ENCODE measurements at regions of chr7 and their contacts with region 1.

Region 1: DNA sequence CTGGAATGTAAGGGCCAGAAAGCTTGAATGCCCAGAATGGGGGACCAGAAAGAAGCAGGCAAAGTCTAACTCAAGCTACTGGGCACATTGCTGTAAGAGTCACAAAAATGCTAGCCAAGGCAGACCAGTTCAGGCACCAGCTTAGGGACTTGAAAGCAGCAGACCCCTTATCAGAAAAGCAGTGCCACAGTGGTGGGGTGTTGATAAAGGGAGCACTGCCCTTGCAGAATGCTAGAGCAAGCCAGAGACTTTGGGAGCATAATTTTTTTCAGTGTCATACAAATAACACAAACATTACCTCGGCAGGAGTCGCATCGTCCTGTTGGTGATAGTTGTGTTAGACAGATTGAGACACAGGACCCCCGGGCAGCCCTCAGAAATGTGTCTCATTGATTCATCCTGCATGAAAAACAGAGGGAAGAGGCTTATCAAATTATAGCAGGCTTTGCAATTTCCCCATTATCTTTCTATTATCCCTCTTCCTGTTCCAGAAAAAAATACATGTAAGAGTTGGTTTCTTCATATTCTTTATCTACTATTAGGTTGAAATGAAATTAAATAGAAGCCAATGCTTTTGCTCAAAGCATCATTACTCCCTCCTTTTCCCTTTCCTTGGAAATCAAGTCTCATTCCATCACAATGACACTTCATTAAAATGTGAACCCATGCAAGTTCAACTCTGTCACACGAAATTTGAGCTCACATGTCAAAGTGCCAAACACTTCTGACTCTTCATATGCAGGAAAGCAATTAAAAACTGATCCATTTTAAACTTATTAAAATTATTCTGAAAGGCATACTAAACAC is 13.4 kb downstream of the LRRC17 start:
- DNase-seq: no peak
- ATAC-seq: no peak

Region 2: DNA sequence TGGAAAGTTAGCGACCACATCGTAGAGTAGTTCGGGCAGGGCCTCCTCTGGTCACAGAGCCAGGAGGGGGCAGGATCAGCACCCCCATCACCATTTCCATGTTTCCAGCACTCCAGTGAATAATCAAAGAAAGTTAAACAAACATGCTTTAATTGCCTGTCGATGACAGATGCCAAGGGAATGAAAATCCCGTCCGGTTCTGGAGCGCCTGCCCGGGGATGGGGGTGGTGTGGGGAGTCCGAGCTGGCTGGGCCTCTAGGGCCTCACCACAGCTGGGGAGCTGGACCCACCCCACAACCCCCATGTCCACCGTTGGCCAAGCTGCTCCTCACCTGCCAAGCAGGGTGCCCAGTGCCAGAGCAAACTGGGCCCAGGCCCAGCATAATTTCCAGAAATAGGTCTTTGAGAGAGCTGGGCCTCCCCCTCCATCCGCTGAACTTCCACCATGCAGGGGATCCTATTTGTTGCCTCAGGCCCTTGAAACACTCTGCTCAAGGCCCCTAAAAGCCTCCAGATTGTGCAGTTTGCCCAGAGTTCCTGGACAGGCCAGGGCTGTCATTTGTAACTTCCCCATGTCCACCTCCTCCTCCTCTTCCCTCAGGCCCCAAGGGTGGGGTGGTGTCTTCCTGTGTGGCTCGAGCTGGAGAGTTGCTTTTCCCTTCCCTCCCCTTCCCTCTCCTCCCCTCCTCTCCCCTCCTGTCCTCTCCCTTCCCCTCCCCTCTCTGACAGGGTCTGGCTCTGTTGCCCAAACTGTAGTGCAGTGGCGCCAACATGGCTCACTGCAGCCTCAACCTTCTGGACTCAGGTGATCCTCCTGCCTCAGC is 1398.1 kb before region 1 on chr7:
- intact Hi-C with region 1: loop called (anchors 10 kb)
- DNase-seq: no peak
- ATAC-seq: no peak

Measured in sciatic nerve (tissue), 2 donors.